GM12878 (cell line): ENCODE measurements at regions of chr19 and their contacts with region 1.

Region 1: DNA sequence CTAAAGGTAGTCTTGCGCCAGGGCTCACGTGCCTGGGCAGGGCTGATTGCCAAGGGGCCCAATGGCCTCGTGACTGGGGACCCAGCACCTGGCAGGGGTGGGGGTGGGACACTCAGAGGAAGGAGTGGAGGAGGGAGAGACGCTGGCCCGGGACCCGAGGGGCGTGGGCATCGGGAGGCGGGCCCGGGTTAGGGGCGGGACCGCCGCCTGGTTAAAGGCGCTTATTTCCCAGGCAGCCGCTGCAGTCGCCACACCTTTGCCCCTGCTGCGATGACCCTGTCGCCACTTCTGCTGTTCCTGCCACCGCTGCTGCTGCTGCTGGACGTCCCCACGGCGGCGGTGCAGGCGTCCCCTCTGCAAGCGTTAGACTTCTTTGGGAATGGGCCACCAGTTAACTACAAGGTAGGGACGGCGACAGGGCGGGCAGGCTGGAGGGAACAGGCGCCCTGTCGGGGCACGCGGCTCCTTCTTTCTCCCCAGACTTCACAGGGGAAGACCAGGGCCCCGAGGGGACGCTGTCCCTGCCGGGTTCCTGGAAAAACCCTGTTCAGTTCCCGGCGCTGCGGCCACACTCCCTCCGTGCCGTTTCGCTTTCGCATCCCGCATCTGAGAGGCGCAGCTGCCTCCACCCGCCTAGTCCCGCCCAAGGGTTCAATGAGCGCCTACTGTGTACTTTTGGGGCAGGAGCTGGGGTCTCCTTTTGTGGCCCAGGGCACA is at the start of gene IFI30:
- DNase-seq: peak; percentile 79
- ATAC-seq: peak; percentile 62
- H3K4me3 ChIP-seq: peak within 1 kb of the TSS; percentile 94
- H3K27ac ChIP-seq: peak within 1 kb of the TSS; percentile 79
- H3K4me1 ChIP-seq: peaks cover 56% of the 10 kb centered on the region
- H3K27me3 ChIP-seq: no peaks in the 10 kb centered on the region
- CTCF ChIP-seq: no peak
- EP300 ChIP-seq: peak in 1 of 2 experiments; percentile 67; a peak in 1 of 4 replicates
- POLR2A ChIP-seq: peak; percentile 97
- RAD21 ChIP-seq: no peak
- polyA plus RNA-seq, gene IFI30: 1,054 to 1,112 TPM

Region 2: DNA sequence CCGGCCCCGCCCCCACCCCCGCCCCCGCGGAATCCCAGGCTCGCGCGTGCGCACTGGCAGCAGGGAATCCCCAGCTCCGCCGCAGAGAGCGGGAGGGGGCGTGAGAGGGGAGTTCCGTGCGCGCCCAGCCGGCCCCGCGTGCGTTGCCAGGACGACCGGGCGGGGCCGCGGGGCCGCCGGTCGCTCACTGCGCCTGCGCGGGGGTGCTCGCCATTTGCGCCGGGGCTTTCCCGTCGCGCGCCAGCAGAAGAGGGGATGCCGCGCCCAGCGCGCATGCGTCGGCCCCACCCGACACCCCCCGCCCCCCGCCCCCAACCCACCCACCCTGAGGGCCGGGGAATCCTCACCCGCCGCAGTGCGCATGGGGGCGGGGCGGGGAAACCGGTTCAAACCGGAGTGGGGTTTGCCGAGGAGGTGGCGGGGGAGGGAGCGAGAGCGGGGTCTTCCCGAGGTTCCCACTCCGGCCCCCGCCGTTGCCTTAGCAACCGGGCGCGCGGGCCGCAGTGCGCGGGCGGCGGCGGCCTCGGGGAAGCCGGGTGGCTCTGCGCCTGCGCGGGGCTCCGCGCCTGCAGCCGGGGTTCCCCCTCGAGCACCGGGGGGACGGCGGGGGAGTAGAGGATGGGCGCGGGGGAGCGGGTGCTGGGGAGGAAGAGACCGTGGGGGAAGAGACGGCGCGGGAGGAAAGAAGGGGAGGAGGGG is 225.8 kb before region 1 on chr19:
- CTCF ChIA-PET with region 1: no interaction called
- POLR2A ChIA-PET with region 1: no interaction called
- RAD21 ChIA-PET with region 1: no interaction called
- SMC1A ChIA-PET with region 1: no interaction called
- in situ Hi-C with region 1: no loop called
- intact Hi-C with region 1: loop called (anchors 5 kb)
- DNase-seq: no peak
- ATAC-seq: peak; percentile 49
- H3K4me3 ChIP-seq: peak overlapping the region; percentile 57; the same call in 1 of the 2 replicates
- H3K27ac ChIP-seq: no peak overlapping the region; the same call in 1 of the 2 replicates
- H3K4me1 ChIP-seq: peaks cover 45% of the 10 kb centered on the region
- H3K27me3 ChIP-seq: peaks cover 6 to 8% of the 10 kb centered on the region in 2 experiments
- CTCF ChIP-seq: no peak
- EP300 ChIP-seq: no peak
- POLR2A ChIP-seq: no peak; the same call in 1 of the 2 replicates
- RAD21 ChIP-seq: no peak

Region 3: GRCh38 chr19:18029617-18030338 is 144.0 kb before region 1 on chr19:
- CTCF ChIA-PET with region 1: no interaction called
- POLR2A ChIA-PET with region 1: no interaction called
- RAD21 ChIA-PET with region 1: no interaction called
- SMC1A ChIA-PET with region 1: no interaction called
- in situ Hi-C with region 1: no loop called
- intact Hi-C with region 1: no loop called
- DNase-seq: no peak
- ATAC-seq: no peak; the same call in 2 of the 3 replicates
- H3K4me3 ChIP-seq: no peak overlapping the region
- H3K27ac ChIP-seq: no peak overlapping the region
- H3K4me1 ChIP-seq: no peaks in the 10 kb centered on the region
- H3K27me3 ChIP-seq: no peaks in the 10 kb centered on the region
- CTCF ChIP-seq: no peak
- EP300 ChIP-seq: no peak
- POLR2A ChIP-seq: no peak
- RAD21 ChIP-seq: no peak

Region 4: GRCh38 chr19:18097217-18097992 is 76.3 kb before region 1 on chr19 and contains the start of gene MAST3:
- CTCF ChIA-PET with region 1: interaction called, 4 read pairs
- POLR2A ChIA-PET with region 1: interaction called, 11 read pairs
- RAD21 ChIA-PET with region 1: interaction called, 8 read pairs
- SMC1A ChIA-PET with region 1: interaction called, 3 read pairs
- in situ Hi-C with region 1: no loop called
- intact Hi-C with region 1: loop called (anchors 5 kb)
- DNase-seq: peak; percentile 64
- ATAC-seq: peak; percentile 85
- H3K4me3 ChIP-seq: peak within 1 kb of the TSS; percentile 96
- H3K27ac ChIP-seq: peak within 1 kb of the TSS; percentile 87
- H3K4me1 ChIP-seq: peaks cover 11% of the 10 kb centered on the region
- H3K27me3 ChIP-seq: no peaks in the 10 kb centered on the region
- CTCF ChIP-seq: no peak
- EP300 ChIP-seq: no peak
- POLR2A ChIP-seq: peak; percentile 78
- RAD21 ChIP-seq: no peak
- polyA plus RNA-seq, gene MAST3: 3.5 to 8.5 TPM

Region 5: DNA sequence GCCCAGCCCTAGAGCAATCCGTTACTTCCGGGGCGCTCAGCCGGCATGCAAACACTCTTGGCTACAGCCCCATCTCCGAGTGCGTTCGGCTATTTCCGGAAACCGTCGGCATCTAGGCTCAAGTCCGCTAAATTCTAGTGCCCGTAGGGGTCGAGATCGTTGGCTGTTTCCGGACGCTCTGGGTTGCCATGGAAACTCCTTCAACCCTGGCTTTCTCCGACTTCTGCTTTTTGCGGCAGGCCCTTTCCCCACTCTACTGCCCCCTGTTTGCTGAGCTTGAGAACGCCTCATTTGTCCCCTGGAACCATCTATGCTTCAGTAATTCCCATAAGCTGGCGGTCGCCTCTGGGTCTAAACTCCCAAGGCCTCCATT is 21.3 kb before region 1 on chr19:
- CTCF ChIA-PET with region 1: interaction called, 17 read pairs
- POLR2A ChIA-PET with region 1: interaction called, 5 read pairs
- RAD21 ChIA-PET with region 1: interaction called, 4 read pairs
- SMC1A ChIA-PET with region 1: interaction called, 7 read pairs
- in situ Hi-C with region 1: no loop called
- intact Hi-C with region 1: loop called (anchors 2 kb)
- DNase-seq: peak; percentile 99
- ATAC-seq: peak; percentile 85
- H3K4me3 ChIP-seq: peak overlapping the region; percentile 59; the same call in 1 of the 2 replicates
- H3K27ac ChIP-seq: peak overlapping the region; percentile 88
- H3K4me1 ChIP-seq: peaks cover 15% of the 10 kb centered on the region
- H3K27me3 ChIP-seq: no peaks in the 10 kb centered on the region
- CTCF ChIP-seq: peak; percentile 79 to 90 (median 85)
- EP300 ChIP-seq: peak in 1 of 2 experiments; percentile 7; a peak in 1 of 4 replicates
- POLR2A ChIP-seq: peak; percentile 68
- RAD21 ChIP-seq: peak; percentile 46; the same call in 1 of the 2 replicates

Region 6: DNA sequence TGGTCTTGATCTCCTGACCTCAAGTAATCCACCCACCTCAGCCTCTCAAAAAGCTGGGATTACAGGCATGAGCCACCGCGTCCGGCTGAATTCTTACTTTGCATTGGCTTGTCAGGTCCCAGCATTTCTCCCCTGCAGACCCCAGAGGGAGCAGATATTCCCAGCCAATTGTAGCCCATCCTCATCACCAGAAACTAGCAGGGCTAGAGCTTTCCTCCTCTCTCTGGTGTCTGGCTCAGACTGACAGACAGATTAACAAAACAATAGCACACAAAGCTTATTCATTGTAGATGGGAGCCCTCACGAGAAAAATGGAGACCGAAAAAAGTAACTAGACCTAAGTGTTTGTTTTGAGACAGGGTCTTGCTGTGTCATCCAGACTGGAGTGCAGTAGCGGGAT is 11.8 kb after region 1 on chr19:
- CTCF ChIA-PET with region 1: interaction called, 7 read pairs
- POLR2A ChIA-PET with region 1: interaction called, 31 read pairs
- RAD21 ChIA-PET with region 1: interaction called, 24 read pairs
- SMC1A ChIA-PET with region 1: interaction called, 19 read pairs
- in situ Hi-C with region 1: no loop called
- intact Hi-C with region 1: no loop called
- DNase-seq: no peak
- ATAC-seq: no peak
- H3K4me3 ChIP-seq: no peak overlapping the region
- H3K27ac ChIP-seq: no peak overlapping the region
- H3K4me1 ChIP-seq: peaks cover 3% of the 10 kb centered on the region; the same call in 1 of the 2 replicates
- H3K27me3 ChIP-seq: no peaks in the 10 kb centered on the region
- CTCF ChIP-seq: no peak
- EP300 ChIP-seq: no peak
- POLR2A ChIP-seq: no peak
- RAD21 ChIP-seq: no peak

Region 7: DNA sequence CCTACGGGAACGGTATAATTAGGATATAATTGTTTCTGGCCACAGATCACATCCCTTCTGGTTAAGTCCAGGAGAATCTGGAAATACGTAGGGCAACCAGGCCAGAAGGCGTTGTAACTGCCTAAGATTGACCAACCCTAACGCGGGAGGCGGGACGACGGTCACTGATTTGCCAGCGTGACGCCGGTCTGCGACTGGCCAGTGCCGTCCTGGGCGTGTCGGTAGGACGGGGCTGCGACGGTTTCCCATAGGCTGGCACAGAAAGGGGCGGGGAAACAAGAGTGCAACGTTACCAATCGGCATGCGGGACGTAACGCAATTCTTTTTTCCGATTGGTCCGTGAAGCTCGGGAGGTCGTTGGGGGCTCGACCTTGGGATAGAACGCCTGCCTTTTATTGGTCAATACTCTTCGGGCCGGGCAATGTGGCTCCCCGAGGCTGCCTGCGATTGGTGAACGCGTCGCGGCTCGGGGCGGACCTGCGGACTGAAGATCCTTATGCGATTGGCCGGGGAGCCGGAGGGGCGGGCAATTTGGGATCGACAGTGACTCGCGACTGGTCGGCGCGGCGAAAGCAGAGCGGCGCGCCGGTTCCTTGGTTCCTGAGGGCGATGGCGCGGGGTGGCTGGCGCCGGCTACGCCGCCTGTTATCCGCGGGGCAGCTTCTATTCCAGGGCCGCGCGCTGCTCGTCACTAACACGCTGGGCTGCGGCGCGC is 19.1 kb after region 1 on chr19 and contains the start of gene MPV17L2:
- CTCF ChIA-PET with region 1: interaction called, 9 read pairs
- POLR2A ChIA-PET with region 1: interaction called, 31 read pairs
- RAD21 ChIA-PET with region 1: interaction called, 29 read pairs
- SMC1A ChIA-PET with region 1: interaction called, 20 read pairs
- in situ Hi-C with region 1: no loop called
- intact Hi-C with region 1: loop called (anchors 1 kb)
- DNase-seq: peak; percentile 100
- ATAC-seq: peak; percentile 94
- H3K4me3 ChIP-seq: peak within 1 kb of the TSS; percentile 79
- H3K27ac ChIP-seq: peak within 1 kb of the TSS; percentile 65
- H3K4me1 ChIP-seq: peaks cover 11% of the 10 kb centered on the region
- H3K27me3 ChIP-seq: no peaks in the 10 kb centered on the region
- CTCF ChIP-seq: no peak
- EP300 ChIP-seq: 0 out of 4 replicates have a peak, but pooled peaks of 1 of the 2 experiments have one; percentile 8
- POLR2A ChIP-seq: peak; percentile 72
- RAD21 ChIP-seq: no peak
- polyA plus RNA-seq, gene MPV17L2: 5.1 to 7.7 TPM

Region 8: GRCh38 chr19:18203863-18204393 is 30.2 kb after region 1 on chr19 and contains the start of gene RAB3A:
- CTCF ChIA-PET with region 1: interaction called, 5 read pairs
- POLR2A ChIA-PET with region 1: interaction called, 22 read pairs
- RAD21 ChIA-PET with region 1: interaction called, 15 read pairs
- SMC1A ChIA-PET with region 1: interaction called, 13 read pairs
- in situ Hi-C with region 1: no loop called
- intact Hi-C with region 1: no loop called
- DNase-seq: peak; percentile 99
- ATAC-seq: peak; percentile 97
- H3K4me3 ChIP-seq: peak within 1 kb of the TSS; percentile 86
- H3K27ac ChIP-seq: peak within 1 kb of the TSS; percentile 68
- H3K4me1 ChIP-seq: peaks cover 6% of the 10 kb centered on the region
- H3K27me3 ChIP-seq: no peaks in the 10 kb centered on the region
- CTCF ChIP-seq: no peak
- EP300 ChIP-seq: no peak
- POLR2A ChIP-seq: peak; percentile 47; the same call in 1 of the 2 replicates
- RAD21 ChIP-seq: no peak
- polyA plus RNA-seq, gene RAB3A: 0.07 TPM in 1 of 2 experiments, not detected in the other